ENCODE measurements at regions of chr3 and their contacts with region 1.

Region 1: DNA sequence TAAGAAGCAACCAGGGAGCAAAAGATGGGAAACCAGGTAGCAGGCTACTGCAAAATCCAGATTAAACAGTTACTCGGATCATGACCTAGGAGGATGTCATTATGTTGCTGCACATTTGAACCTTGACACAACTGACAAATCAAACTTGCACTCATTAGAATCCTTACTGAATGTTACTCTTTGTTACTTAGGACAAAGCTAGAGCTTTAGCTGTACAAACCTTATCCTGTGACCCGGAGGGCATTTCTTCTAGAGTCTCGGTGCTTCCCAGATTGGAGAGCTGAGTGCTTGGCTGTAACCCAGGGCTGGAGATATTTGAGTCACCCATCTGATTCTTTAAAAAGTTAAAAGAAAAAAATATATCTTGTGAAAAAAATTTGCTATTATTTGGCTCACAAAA is 43.4 kb downstream of the DCP1A start:
- DNase-seq: no peak
- H3K4me3 ChIP-seq: no peak overlapping the region
- H3K27ac ChIP-seq: no peak overlapping the region
- H3K4me1 ChIP-seq: no peaks in the 10 kb centered on the region
- H3K27me3 ChIP-seq: no peaks in the 10 kb centered on the region

Region 2: GRCh38 chr3:53264718-53265117 is 39.2 kb before region 1 on chr3:
- CTCF ChIA-PET with region 1: no interaction called
- POLR2A ChIA-PET with region 1: no interaction called
- DNase-seq: no peak
- H3K4me3 ChIP-seq: no peak overlapping the region
- H3K27ac ChIP-seq: no peak overlapping the region
- H3K4me1 ChIP-seq: peaks cover 5 to 30% (median 7%) of the 10 kb centered on the region in 4 experiments
- H3K27me3 ChIP-seq: no peaks in the 10 kb centered on the region

Region 3: GRCh38 chr3:53287131-53287629 is 16.8 kb before region 1 on chr3:
- CTCF ChIA-PET with region 1: interaction called, 24 read pairs
- POLR2A ChIA-PET with region 1: no interaction called
- DNase-seq: peak; percentile 26 to 65 (median 63)
- H3K4me3 ChIP-seq: no peak overlapping the region
- H3K27ac ChIP-seq: peak overlapping the region in 1 of 2 experiments; percentile 6
- H3K4me1 ChIP-seq: peaks cover 0 to 7% (median 0%) of the 10 kb centered on the region in 4 experiments
- H3K27me3 ChIP-seq: no peaks in the 10 kb centered on the region

Measured in common myeloid progenitor, CD34-positive (primary cell).